Activated B cell treated with CpG ODN at 0.5 μM for 24 hours (primary cell): ENCODE measurements at regions of chr4 and their contacts with region 1.

Region 1: GRCh38 chr4:140359562-140360427 is 13.7 kb upstream of the SCOC start:
- DNase-seq: peak; percentile 27
- ATAC-seq: peak; percentile 91
- H3K4me3 Mint-ChIP-seq: no peak overlapping the region
- H3K27ac Mint-ChIP-seq: no peak overlapping the region
- H3K4me1 Mint-ChIP-seq: no peaks in the 10 kb centered on the region
- H3K27me3 Mint-ChIP-seq: peaks cover 12% of the 10 kb centered on the region
- CTCF ChIP-seq: peak; percentile 93

Region 2: DNA sequence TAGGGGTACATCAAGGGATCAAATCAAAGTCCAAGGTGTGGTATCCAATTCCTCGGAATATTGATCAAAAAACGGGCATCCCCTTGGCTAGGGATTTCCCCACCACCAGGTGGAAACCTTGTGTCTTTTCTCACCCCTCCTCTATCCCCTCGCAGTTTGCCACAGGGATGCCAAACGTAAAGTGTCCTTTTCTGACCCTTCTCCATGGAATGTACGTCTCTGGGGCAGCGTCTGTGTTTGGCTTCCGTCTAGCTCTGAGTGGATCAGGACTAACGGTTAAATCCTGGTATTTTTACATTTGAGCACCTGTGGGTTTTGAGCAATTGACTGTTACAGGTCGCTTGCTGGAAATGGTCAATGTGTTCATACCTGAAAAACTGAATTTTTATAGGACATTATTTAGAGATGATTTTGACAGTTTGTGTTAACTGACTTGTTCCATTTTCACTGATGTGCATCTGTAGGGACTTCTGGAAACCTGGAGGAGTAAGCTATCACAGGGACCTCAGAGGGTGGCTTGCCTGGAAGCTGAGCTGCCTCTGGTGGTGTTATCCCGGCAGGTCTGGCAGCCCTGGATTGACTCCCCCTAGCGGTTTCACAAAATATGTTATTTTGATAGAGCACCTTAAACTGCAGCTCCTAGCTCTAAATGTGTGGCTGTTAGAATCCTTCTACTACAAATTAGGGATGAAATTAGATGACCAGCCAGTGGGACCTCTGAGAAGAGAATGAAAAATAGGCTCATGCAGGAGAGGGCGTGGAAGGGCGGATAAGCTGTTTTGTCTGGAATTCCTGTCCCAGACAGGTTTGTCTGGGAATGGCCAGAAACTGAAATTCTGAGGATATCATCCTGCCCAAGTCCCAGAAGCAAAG is 702.9 kb before region 1 on chr4:
- CTCF ChIA-PET with region 1: interaction called, 6 read pairs
- POLR2A ChIA-PET with region 1: no interaction called
- intact Hi-C with region 1: loop called (anchors 2 kb)
- DNase-seq: no peak
- ATAC-seq: peak; percentile 79
- H3K4me3 Mint-ChIP-seq: no peak overlapping the region
- H3K27ac Mint-ChIP-seq: no peak overlapping the region
- H3K4me1 Mint-ChIP-seq: peaks cover 5% of the 10 kb centered on the region
- H3K27me3 Mint-ChIP-seq: peaks cover 17% of the 10 kb centered on the region
- CTCF ChIP-seq: peak; percentile 70

Region 3: GRCh38 chr4:140012688-140013486 is 346.9 kb before region 1 on chr4:
- CTCF ChIA-PET with region 1: interaction called, 26 read pairs
- POLR2A ChIA-PET with region 1: no interaction called
- intact Hi-C with region 1: loop called (anchors 1 kb)
- DNase-seq: no peak
- ATAC-seq: peak; percentile 81
- H3K4me3 Mint-ChIP-seq: no peak overlapping the region
- H3K27ac Mint-ChIP-seq: no peak overlapping the region
- H3K4me1 Mint-ChIP-seq: no peaks in the 10 kb centered on the region
- H3K27me3 Mint-ChIP-seq: peaks cover 10% of the 10 kb centered on the region
- CTCF ChIP-seq: no peak

Region 4: DNA sequence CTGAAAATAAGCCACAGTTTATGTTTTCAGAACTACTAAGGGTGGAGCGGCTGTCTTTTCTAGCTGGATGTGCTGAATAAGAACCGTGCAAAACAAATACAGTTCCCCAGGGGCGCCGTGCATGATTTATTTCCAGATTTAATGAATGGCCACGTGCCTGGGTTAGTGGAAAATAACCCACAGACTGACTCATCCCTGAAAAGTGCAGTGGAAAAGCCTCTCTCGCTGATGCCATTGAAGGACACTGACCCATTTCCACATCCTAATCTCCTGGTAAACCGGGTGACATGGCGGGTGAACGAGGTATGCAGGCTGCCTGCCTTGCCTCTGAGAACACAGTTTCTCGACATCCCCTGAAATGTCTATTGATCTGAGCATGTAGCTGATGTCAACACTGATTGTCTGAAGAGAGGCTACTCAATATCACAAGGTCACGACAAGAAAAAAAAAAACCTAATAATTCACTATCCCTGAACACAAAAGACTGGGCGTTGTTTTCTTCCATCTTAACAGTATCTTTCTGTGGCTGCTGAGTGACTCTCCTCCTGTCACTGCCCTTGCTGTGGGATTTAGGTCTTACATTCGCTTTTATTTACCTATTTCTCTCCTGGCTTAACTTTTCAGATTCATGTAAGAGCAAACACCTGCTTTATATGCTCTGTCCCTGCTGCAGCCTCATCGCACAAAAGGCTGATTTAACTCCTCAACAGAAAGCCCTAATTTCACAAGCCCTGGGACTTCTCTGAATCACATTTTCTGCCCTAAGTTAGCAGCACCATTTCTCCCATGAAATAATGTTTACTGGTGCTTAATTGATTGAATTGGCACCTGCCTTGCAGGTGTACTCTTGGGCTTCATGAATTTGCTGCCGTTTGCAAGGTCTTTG is 63.2 kb before region 1 on chr4:
- CTCF ChIA-PET with region 1: no interaction called
- POLR2A ChIA-PET with region 1: no interaction called
- intact Hi-C with region 1: no loop called
- DNase-seq: no peak
- ATAC-seq: no peak
- H3K4me3 Mint-ChIP-seq: no peak overlapping the region
- H3K27ac Mint-ChIP-seq: no peak overlapping the region
- H3K4me1 Mint-ChIP-seq: no peaks in the 10 kb centered on the region
- H3K27me3 Mint-ChIP-seq: peaks cover 3% of the 10 kb centered on the region
- CTCF ChIP-seq: no peak

Region 5: DNA sequence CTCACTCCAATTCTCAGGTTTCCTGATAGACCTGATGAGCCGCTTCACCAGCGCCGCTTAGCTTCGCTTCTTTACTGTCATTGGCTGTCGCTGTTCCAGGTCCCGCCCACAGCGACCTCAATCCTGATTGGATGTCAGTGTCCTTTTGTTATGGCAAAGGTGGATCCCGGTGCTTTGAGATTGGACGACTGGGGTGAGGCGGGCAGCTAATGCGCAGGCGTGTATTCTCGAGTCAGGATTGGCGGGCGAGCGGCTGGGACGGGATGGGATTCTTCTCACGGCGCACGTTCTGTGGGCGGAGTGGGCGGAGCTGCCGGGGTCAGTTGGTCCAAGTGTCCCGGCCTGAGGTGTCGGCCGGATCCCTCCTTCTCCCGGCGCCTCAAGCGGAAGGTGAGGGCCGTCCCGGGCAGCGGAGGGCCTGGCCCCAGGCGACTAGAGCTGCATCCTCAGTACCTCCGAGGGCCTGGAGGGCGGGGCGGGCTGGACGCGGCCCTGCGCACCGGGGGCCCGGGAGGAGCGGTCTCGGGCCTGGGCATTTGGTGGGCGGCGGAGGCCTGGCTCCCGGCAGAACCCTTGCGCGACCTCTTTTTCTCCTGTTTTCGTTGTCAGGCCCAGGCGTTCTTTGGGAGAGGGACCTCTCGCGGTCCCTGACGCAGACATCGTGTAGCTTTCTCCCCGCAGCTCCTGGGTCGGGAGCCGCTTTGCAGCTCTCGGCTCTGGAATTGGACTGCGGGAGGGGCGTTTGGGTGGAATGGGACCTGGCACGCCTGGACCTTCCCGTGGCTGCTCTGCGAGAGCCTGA is 13.7 kb after region 1 on chr4 and contains the start of gene SCOC:
- CTCF ChIA-PET with region 1: interaction called, 53 read pairs
- POLR2A ChIA-PET with region 1: interaction called, 14 read pairs
- intact Hi-C with region 1: loop called (anchors 1 kb)
- DNase-seq: peak; percentile 85
- ATAC-seq: peak; percentile 95
- H3K4me3 Mint-ChIP-seq: no peak within 1 kb of the TSS
- H3K27ac Mint-ChIP-seq: peak within 1 kb of the TSS; percentile 74
- H3K4me1 Mint-ChIP-seq: peaks cover 22% of the 10 kb centered on the region
- H3K27me3 Mint-ChIP-seq: no peaks in the 10 kb centered on the region
- CTCF ChIP-seq: no peak
- total RNA-seq, gene SCOC: 18.0 and 19.9 TPM in 2 replicates

Region 6: GRCh38 chr4:140609548-140610425 is 250.0 kb after region 1 on chr4:
- CTCF ChIA-PET with region 1: interaction called, 57 read pairs
- POLR2A ChIA-PET with region 1: no interaction called
- intact Hi-C with region 1: loop called (anchors 1 kb)
- DNase-seq: no peak
- ATAC-seq: peak; percentile 83
- H3K4me3 Mint-ChIP-seq: no peak overlapping the region
- H3K27ac Mint-ChIP-seq: no peak overlapping the region
- H3K4me1 Mint-ChIP-seq: peaks cover 12% of the 10 kb centered on the region
- H3K27me3 Mint-ChIP-seq: peaks cover 8% of the 10 kb centered on the region
- CTCF ChIP-seq: peak; percentile 49

Region 7: DNA sequence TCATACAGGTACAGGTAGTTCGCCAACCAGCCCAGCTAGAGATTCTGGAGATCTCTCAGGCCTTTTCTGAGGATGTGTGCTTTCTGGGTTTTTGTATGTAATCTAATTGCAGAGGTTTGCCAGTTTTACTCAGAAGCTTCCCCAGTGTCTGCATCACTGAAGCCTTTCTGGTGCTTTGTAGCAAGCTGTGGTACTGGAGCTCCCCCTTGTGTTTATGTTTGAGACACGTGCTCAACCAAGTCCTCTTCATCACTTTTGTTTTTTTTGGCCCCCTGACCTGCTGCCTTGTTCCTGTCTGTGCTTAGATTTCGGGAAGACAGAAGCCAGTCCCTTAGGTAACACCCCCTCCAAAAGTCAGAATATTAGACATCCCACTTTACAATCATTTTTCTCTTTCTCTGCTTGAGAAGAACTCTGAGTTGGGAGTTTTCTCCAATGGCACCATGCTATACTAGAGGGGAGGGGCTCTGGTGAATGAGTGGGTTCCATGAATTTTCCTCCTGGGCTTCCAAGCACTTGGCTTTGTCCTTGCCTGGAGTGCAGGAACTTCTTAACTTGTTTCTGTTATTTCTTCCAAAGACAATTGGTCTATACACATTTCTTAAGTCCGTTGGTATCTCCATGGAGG is 524.8 kb after region 1 on chr4:
- CTCF ChIA-PET with region 1: interaction called, 78 read pairs
- POLR2A ChIA-PET with region 1: interaction called, 3 read pairs
- intact Hi-C with region 1: loop called (anchors 1 kb)
- DNase-seq: no peak
- ATAC-seq: peak; percentile 79
- H3K4me3 Mint-ChIP-seq: no peak overlapping the region
- H3K27ac Mint-ChIP-seq: no peak overlapping the region
- H3K4me1 Mint-ChIP-seq: no peaks in the 10 kb centered on the region
- H3K27me3 Mint-ChIP-seq: peaks cover 16% of the 10 kb centered on the region
- CTCF ChIP-seq: no peak